ENCODE measurements at regions of chr12 and their contacts with region 1.

Region 1: GRCh38 chr12:53352331-53353256 is 16.4 kb upstream of the SP7 start:
- DNase-seq: peak; percentile 84
- H3K4me3 ChIP-seq: no peak overlapping the region
- H3K27ac ChIP-seq: no peak overlapping the region
- H3K4me1 ChIP-seq: peaks cover 2% of the 10 kb centered on the region
- H3K27me3 ChIP-seq: no peaks in the 10 kb centered on the region
- CTCF ChIP-seq: peak; percentile 73 to 79
- POLR2A ChIP-seq: no peak

Region 2: GRCh38 chr12:53336181-53336681 is 16.4 kb before region 1 on chr12 and contains the start of gene SP7:
- CTCF ChIA-PET with region 1: interaction called, 41 read pairs
- POLR2A ChIA-PET with region 1: no interaction called
- dilution Hi-C with region 1: no loop called
- intact Hi-C with region 1: no loop called
- DNase-seq: no peak
- H3K4me3 ChIP-seq: no peak within 1 kb of the TSS
- H3K27ac ChIP-seq: no peak within 1 kb of the TSS
- H3K4me1 ChIP-seq: no peaks in the 10 kb centered on the region
- H3K27me3 ChIP-seq: peaks cover 21 to 27% of the 10 kb centered on the region in 2 experiments
- CTCF ChIP-seq: no peak
- POLR2A ChIP-seq: no peak
- total RNA-seq, gene SP7: not detected in 2 replicates

Region 3: DNA sequence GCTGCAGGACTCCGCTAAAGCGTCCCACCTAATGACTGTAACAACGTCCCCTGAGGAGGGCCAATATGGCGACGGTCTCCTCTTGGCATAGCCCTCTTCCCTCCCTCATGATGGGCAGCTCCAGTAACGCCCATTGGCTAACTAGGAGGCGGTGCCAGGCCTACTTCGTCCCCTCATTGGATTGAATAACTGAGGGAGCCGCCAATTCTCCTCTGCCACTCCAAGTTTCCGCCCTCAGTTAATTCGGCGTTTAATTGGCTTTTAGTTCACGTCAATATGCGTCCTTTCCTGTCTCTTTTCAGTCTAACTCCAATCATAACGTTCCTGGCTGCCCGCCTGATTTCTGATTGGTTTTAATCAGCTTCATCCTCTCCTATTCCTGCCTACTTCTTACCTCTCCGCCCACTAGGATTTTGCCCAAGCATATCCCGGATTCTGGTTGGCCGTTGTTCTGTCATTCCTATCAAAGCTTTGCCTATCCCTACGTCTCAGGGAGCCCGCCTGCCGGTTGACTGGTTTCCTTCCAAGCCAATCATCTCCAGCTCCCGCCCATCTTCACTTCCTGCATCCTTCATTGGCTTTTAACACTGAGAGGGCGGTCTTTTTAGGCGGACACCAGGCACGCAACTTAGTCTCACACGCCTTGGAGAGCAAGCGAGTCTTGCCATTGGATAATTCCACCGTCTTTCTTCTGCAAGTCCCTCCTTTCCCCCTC is 27.0 kb after region 1 on chr12:
- CTCF ChIA-PET with region 1: interaction called, 87 read pairs
- POLR2A ChIA-PET with region 1: interaction called, 3 read pairs
- dilution Hi-C with region 1: no loop called
- intact Hi-C with region 1: loop called (anchors 1 kb)
- DNase-seq: peak; percentile 100
- H3K4me3 ChIP-seq: peak overlapping the region; percentile 4 to 55 (median 47)
- H3K27ac ChIP-seq: peak overlapping the region; percentile 58
- H3K4me1 ChIP-seq: peaks cover 30% of the 10 kb centered on the region
- H3K27me3 ChIP-seq: no peaks in the 10 kb centered on the region
- CTCF ChIP-seq: no peak
- POLR2A ChIP-seq: peak; percentile 90

Region 4: DNA sequence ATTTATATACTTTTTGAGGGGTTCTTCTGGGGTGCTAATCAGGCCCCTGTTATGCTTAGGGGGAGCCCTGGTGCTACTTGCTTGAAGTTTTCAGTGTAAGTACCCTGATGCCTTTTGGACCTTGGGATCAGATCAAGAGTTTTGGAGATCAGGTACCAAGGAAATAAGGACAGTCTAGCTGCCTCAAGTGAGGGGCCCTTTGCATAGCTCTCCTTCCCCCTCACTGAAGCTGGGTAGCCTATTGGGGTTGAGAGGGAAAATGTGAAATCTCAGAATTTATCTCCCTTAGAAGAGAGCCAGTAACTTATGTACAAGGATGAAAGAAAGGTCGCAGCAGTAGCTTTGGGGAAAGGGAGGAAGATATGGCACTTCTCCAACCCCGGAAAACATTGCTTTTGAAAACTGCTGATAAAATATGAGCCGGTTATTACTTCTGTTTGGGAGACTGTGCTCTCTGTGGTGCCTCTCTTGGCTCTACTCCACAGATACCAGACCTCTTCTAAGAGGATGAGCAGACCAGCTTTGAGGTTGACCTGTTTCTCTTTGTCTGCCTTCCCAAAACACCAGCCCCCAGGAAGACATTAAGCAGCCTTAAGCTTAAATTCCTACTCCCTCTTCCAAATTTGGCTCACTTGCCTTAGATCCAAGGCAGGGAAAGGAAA is 62.3 kb after region 1 on chr12:
- CTCF ChIA-PET with region 1: interaction called, 444 read pairs
- POLR2A ChIA-PET with region 1: no interaction called
- dilution Hi-C with region 1: no loop called
- intact Hi-C with region 1: no loop called
- DNase-seq: peak; percentile 32
- H3K4me3 ChIP-seq: no peak overlapping the region
- H3K27ac ChIP-seq: no peak overlapping the region
- H3K4me1 ChIP-seq: peaks cover 24% of the 10 kb centered on the region
- H3K27me3 ChIP-seq: no peaks in the 10 kb centered on the region
- CTCF ChIP-seq: no peak
- POLR2A ChIP-seq: no peak

Region 5: GRCh38 chr12:53451661-53452158 is 99.1 kb after region 1 on chr12 and contains the start of gene PCBP2:
- CTCF ChIA-PET with region 1: interaction called, 15 read pairs
- POLR2A ChIA-PET with region 1: no interaction called
- dilution Hi-C with region 1: no loop called
- intact Hi-C with region 1: no loop called
- DNase-seq: peak; percentile 99
- H3K4me3 ChIP-seq: peak within 1 kb of the TSS; percentile 81 to 100 (median 89)
- H3K27ac ChIP-seq: peak within 1 kb of the TSS; percentile 87
- H3K4me1 ChIP-seq: peaks cover 12% of the 10 kb centered on the region
- H3K27me3 ChIP-seq: no peaks in the 10 kb centered on the region
- CTCF ChIP-seq: peak; percentile 89 to 93
- POLR2A ChIP-seq: no peak
- total RNA-seq, gene PCBP2: 948 and 995 TPM in 2 replicates

Region 6: GRCh38 chr12:53489242-53489859 is 136.8 kb after region 1 on chr12:
- CTCF ChIA-PET with region 1: no interaction called
- POLR2A ChIA-PET with region 1: no interaction called
- dilution Hi-C with region 1: no loop called
- intact Hi-C with region 1: no loop called
- DNase-seq: no peak
- H3K4me3 ChIP-seq: no peak overlapping the region
- H3K27ac ChIP-seq: no peak overlapping the region
- H3K4me1 ChIP-seq: peaks cover 11% of the 10 kb centered on the region
- H3K27me3 ChIP-seq: no peaks in the 10 kb centered on the region
- CTCF ChIP-seq: no peak
- POLR2A ChIP-seq: no peak

Region 7: DNA sequence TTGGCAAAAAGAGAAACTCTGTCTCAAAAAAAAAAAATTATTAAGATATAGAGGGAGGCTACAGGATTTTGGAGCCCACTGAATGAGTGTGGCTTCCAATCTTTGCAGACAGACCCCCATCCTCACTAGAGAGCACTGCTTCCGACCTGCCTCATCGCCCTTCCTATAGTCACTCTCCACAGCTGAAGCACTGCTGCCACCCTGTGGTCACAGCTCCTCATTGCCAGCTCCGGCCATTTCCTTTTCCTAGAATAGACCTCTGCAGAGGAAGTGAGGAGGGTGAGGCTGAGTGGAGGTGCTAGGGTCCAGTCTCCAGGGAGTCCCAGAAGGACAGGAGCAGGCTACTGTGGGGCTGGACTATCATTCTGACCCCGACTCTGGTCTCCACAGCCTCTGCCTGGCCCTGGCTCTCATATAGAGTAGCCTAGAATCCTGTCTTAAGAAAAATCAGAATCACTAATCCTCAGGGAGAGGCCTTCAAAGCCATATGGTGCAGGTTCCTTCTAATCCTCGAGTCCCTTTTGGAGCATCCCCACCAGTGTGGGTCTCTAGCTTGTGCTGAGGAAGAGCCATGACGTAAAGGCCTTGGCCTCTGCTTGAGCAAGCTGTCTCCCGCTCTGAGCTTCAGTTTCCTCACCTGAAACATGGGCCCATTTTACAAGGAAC is 156.1 kb after region 1 on chr12:
- CTCF ChIA-PET with region 1: interaction called, 23 read pairs
- POLR2A ChIA-PET with region 1: no interaction called
- dilution Hi-C with region 1: no loop called
- intact Hi-C with region 1: loop called (anchors 1 kb)
- DNase-seq: peak; percentile 89
- H3K4me3 ChIP-seq: no peak overlapping the region
- H3K27ac ChIP-seq: no peak overlapping the region
- H3K4me1 ChIP-seq: peaks cover 3% of the 10 kb centered on the region
- H3K27me3 ChIP-seq: no peaks in the 10 kb centered on the region
- CTCF ChIP-seq: peak; percentile 90 to 94
- POLR2A ChIP-seq: no peak

Measured in endothelial cell of umbilical vein (primary cell).